CD8-positive, alpha-beta T cell (primary cell): ENCODE measurements at regions of chr3 and their contacts with region 1.

Region 1: GRCh38 chr3:115074502-115074901 is 72.6 kb downstream of the ZBTB20 start:
- DNase-seq: no peak
- ATAC-seq: no peak
- H3K4me3 ChIP-seq: no peak overlapping the region
- H3K4me3 Mint-ChIP-seq: no peak overlapping the region
- H3K27ac ChIP-seq: no peak overlapping the region
- H3K27ac Mint-ChIP-seq: no peak overlapping the region
- H3K4me1 ChIP-seq: no peaks in the 10 kb centered on the region
- H3K4me1 Mint-ChIP-seq: peaks cover 47% of the 10 kb centered on the region
- H3K27me3 ChIP-seq: no peaks in the 10 kb centered on the region
- H3K27me3 Mint-ChIP-seq: no peaks in the 10 kb centered on the region
- CTCF ChIP-seq: no peak

Region 2: DNA sequence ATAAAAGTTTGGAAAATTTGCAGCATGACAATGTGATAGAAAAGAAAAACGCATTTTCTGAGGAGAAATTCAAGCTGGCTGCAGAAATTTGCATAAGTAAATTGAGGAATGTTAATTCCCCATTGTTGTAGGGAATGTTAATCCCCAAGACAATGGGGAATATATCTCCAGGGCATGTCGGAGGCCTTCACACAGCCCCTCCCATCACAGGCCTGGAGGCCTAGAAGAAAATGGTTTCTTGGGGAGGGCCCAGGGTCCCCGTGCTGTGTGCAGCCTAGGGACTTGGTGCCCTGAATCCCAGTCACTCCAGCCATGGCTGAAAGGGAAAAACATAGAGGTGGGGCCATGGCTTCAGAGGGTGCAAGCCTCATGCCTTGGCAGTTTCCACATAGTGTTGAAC is 1762.1 kb before region 1 on chr3:
- CTCF ChIA-PET with region 1: no interaction called
- POLR2A ChIA-PET with region 1: no interaction called
- intact Hi-C with region 1: no loop called
- DNase-seq: no peak
- ATAC-seq: no peak
- H3K4me3 ChIP-seq: no peak overlapping the region
- H3K4me3 Mint-ChIP-seq: no peak overlapping the region
- H3K27ac ChIP-seq: no peak overlapping the region
- H3K27ac Mint-ChIP-seq: no peak overlapping the region
- H3K4me1 ChIP-seq: no peaks in the 10 kb centered on the region
- H3K4me1 Mint-ChIP-seq: no peaks in the 10 kb centered on the region
- H3K27me3 ChIP-seq: no peaks in the 10 kb centered on the region
- H3K27me3 Mint-ChIP-seq: no peaks in the 10 kb centered on the region
- CTCF ChIP-seq: no peak

Region 3: GRCh38 chr3:114668099-114668498 is 406.4 kb before region 1 on chr3:
- CTCF ChIA-PET with region 1: no interaction called
- POLR2A ChIA-PET with region 1: no interaction called
- intact Hi-C with region 1: no loop called
- DNase-seq: no peak
- ATAC-seq: no peak
- H3K4me3 ChIP-seq: no peak overlapping the region
- H3K4me3 Mint-ChIP-seq: no peak overlapping the region
- H3K27ac ChIP-seq: no peak overlapping the region
- H3K27ac Mint-ChIP-seq: no peak overlapping the region
- H3K4me1 ChIP-seq: no peaks in the 10 kb centered on the region
- H3K4me1 Mint-ChIP-seq: peaks cover 7% of the 10 kb centered on the region
- H3K27me3 ChIP-seq: no peaks in the 10 kb centered on the region
- H3K27me3 Mint-ChIP-seq: no peaks in the 10 kb centered on the region
- CTCF ChIP-seq: no peak

Region 4: DNA sequence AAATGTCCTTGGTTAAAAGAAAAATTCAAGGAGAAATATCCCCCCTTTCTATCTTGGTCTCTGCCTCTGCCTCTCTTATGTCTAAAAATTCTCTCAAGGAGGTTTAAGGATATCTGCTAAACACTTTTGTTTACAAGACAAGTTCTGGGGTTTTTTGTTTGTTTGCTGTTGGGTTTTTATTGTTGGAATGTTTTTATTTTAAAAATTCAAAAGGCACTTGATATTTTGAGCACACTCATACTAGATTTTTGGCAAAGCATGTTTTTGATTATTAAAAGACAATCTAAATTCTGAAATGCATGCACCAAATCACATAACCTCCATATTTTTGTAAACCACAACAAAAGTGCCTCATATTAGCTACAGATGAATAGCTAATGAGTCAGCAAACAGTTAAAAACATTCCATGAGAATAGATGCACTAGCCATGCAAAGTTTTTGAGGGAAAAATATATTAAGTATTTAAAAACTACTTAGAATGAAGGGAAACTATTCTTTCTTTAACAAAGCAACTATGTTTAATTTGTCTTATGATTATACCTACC is 12.0 kb before region 1 on chr3:
- CTCF ChIA-PET with region 1: no interaction called
- POLR2A ChIA-PET with region 1: no interaction called
- intact Hi-C with region 1: loop called in 1 of 2 experiments (anchors 2 kb)
- DNase-seq: no peak
- ATAC-seq: no peak
- H3K4me3 ChIP-seq: no peak overlapping the region
- H3K4me3 Mint-ChIP-seq: no peak overlapping the region
- H3K27ac ChIP-seq: no peak overlapping the region
- H3K27ac Mint-ChIP-seq: no peak overlapping the region
- H3K4me1 ChIP-seq: no peaks in the 10 kb centered on the region
- H3K4me1 Mint-ChIP-seq: peaks cover 12% of the 10 kb centered on the region
- H3K27me3 ChIP-seq: no peaks in the 10 kb centered on the region
- H3K27me3 Mint-ChIP-seq: no peaks in the 10 kb centered on the region
- CTCF ChIP-seq: no peak

Region 5: GRCh38 chr3:115127208-115127607 is 52.7 kb after region 1 on chr3:
- CTCF ChIA-PET with region 1: no interaction called
- POLR2A ChIA-PET with region 1: no interaction called
- intact Hi-C with region 1: no loop called
- DNase-seq: no peak
- ATAC-seq: no peak
- H3K4me3 ChIP-seq: no peak overlapping the region
- H3K4me3 Mint-ChIP-seq: no peak overlapping the region
- H3K27ac ChIP-seq: no peak overlapping the region
- H3K27ac Mint-ChIP-seq: no peak overlapping the region
- H3K4me1 ChIP-seq: no peaks in the 10 kb centered on the region
- H3K4me1 Mint-ChIP-seq: peaks cover 20% of the 10 kb centered on the region
- H3K27me3 ChIP-seq: no peaks in the 10 kb centered on the region
- H3K27me3 Mint-ChIP-seq: no peaks in the 10 kb centered on the region
- CTCF ChIP-seq: no peak